Cardiac septum (tissue), 1 donor: ENCODE measurements at regions of chr5 and their contacts with region 1.

Region 1: GRCh38 chr5:171418316-171418981 is 998 bp upstream of the FGF18 start:
- DNase-seq: peak; percentile 88

Region 2: DNA sequence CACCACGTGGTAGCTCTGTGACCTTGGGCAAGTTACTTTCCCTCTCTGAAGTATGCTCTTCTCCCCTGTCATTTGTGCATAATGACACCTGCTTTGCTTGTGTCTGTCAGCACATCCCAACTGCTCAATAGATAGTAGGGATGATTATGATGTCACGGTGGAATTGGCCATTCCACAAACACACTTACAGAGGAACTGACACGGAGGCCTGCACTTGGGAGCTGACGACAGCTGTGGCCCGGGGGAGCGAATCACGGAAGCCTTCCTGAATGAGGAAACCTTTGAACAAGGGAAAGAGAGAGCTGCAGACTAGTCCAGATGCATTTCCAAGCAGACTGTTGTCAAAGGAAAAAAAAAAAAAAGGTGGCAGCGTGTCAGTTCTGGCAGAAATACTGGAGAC is 88.4 kb before region 1 on chr5:
- intact Hi-C with region 1: no loop called
- DNase-seq: no peak

Region 3: DNA sequence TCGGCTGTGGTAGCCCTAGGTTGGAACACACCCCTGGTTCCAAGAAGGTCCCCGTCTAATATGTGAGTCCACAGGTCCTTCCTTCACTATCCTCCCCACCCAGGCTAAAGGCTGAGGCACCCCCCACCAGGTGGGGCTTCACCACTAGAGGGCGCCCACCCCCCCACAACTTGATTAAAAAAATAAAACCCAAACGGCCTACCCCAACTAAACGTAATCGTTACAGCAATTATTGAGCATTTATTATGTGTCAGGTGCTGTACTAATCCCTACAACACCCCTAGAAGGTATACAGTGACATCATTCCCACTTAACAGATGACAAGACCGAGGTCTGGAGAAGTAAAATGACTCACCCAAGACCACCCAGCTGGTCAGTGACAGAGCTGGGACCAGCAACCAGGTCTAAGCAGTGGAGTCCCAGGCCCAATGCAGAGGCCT is 66.0 kb after region 1 on chr5:
- intact Hi-C with region 1: loop called (anchors 5 kb)
- DNase-seq: no peak

Region 4: DNA sequence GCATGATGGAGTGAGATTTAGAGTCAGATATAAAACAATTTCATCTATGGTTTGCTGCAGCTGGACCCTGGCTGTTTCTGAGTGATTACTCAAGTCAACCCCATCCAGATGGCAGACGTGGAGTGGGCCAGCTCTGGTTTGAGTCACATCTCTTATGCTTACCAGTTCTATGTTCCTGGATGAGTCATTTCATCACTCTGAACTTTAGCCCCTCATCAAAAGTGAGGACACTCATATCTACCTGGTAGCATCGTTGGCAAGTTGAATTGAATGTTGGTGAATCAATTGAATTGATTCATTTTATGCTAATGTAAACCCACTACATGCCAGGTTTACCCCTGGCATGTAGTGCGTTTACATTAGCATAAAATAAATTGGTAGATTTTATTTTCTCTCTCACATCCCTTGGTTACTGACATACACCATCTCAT is 177.4 kb after region 1 on chr5:
- intact Hi-C with region 1: loop called (anchors 5 kb)
- DNase-seq: no peak

Region 5: DNA sequence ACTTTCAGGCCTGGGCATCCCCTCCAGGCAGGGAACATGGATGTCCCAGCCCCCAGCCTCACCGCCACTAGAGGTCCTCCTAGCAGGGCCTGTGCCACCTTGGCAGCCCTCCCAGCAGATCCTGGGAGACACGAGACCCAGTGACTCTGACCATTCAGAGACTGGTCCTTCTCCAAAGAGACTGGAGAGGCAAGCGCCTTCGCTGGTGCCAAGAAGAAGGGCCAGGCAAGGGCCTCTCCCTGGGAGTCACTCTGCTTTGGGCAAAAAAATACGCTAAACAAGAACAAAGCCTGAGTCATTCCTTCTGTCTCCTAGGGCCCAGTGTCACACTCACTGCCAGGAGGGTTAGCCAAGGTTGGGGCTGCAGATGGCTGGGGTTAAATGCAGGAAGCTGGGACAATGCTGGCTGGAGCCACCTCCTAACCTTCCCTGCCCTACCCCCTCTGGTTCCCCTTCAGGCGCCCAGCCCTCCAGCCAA is 331.9 kb after region 1 on chr5:
- intact Hi-C with region 1: loop called (anchors 5 kb)
- DNase-seq: peak; percentile 81

Region 6: GRCh38 chr5:171907725-171908343 is 489.4 kb after region 1 on chr5:
- intact Hi-C with region 1: loop called (anchors 2 kb)
- DNase-seq: no peak